ENCODE measurements at regions of chr10 and their contacts with region 1.

Region 1: DNA sequence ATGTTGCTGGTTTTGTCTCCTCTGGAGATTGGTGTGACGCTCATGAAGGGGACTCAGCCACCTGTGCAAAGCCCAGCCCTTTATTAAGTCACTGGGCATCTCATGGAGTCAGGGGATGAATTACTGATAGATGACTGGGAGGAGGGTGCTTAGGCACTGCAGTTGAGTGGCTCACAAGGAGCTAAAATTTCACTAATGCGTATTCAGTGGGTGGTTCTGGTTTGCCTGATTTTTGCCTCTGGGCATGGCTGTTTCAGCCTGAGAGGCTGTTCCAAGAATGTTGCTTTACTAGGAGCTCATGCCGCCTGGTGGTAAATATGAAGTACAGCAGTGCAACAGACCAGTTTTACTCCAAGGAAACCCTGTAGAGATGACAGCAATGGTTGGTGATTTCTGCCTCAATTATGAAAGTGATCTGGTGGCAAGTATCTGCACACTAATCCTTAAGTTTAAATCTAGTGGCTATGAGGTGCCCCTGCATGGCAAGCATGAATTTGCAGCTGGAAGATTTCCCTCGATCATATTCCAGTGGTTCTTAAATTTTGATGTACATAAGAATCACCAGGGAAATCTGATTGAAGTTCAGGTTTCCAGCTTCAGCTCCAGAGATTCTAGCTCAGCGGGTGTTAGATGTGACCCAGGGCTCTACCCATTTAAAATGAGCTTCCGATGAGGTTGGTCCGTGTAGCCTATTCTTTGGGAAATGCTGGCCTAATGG is 19.9 kb downstream of the ACTA2 start:
- DNase-seq: peak; percentile 59
- ATAC-seq: peak; percentile 84
- H3K4me3 Mint-ChIP-seq: no peak overlapping the region
- H3K27ac Mint-ChIP-seq: peak overlapping the region; percentile 20
- H3K4me1 Mint-ChIP-seq: peaks cover 18% of the 10 kb centered on the region
- H3K27me3 Mint-ChIP-seq: no peaks in the 10 kb centered on the region

Region 2: GRCh38 chr10:88442716-88443115 is 490.0 kb before region 1 on chr10:
- CTCF ChIA-PET with region 1: no interaction called
- POLR2A ChIA-PET with region 1: no interaction called
- intact Hi-C with region 1: no loop called
- DNase-seq: no peak
- ATAC-seq: no peak
- H3K4me3 Mint-ChIP-seq: no peak overlapping the region
- H3K27ac Mint-ChIP-seq: no peak overlapping the region
- H3K4me1 Mint-ChIP-seq: no peaks in the 10 kb centered on the region
- H3K27me3 Mint-ChIP-seq: no peaks in the 10 kb centered on the region

Region 3: DNA sequence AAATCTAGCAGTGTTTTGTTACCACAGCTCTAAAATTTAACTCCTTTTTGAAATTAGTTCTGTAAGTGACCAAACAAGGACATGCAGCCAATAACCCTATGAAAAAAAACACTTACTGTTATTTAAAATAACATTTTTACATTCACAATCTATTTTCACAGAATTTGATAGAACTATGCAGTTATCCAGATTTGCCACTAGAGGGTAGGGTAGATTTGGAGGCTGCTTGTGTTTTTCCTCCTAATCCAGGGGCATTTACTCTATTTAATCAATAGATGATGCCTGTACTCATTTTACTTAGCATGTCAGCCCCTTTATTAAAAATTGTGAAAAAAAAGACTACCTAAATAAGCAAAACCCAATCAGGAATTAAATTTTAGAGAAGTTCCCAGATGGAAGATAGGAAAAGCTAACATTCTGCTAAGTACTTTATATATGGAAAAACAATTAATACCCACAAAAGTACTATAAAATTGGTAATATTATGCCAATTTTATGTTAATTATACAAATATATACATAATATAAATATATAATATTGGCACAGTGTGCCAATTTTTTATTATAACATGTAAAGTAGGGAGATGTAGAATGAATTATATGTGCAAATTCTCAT is 244.7 kb before region 1 on chr10:
- CTCF ChIA-PET with region 1: interaction called, 7 read pairs
- POLR2A ChIA-PET with region 1: no interaction called
- intact Hi-C with region 1: loop called (anchors 1 to 5 kb)
- DNase-seq: no peak
- ATAC-seq: no peak
- H3K4me3 Mint-ChIP-seq: no peak overlapping the region
- H3K27ac Mint-ChIP-seq: no peak overlapping the region
- H3K4me1 Mint-ChIP-seq: no peaks in the 10 kb centered on the region
- H3K27me3 Mint-ChIP-seq: peaks cover 8% of the 10 kb centered on the region

Region 4: GRCh38 chr10:88835096-88835909 is 97.4 kb before region 1 on chr10:
- CTCF ChIA-PET with region 1: interaction called, 217 read pairs
- POLR2A ChIA-PET with region 1: interaction called, 5 read pairs
- intact Hi-C with region 1: loop called (anchors 1 kb)
- DNase-seq: peak; percentile 93
- ATAC-seq: peak; percentile 90
- H3K4me3 Mint-ChIP-seq: no peak overlapping the region
- H3K27ac Mint-ChIP-seq: no peak overlapping the region
- H3K4me1 Mint-ChIP-seq: peaks cover 28% of the 10 kb centered on the region
- H3K27me3 Mint-ChIP-seq: no peaks in the 10 kb centered on the region

Region 5: DNA sequence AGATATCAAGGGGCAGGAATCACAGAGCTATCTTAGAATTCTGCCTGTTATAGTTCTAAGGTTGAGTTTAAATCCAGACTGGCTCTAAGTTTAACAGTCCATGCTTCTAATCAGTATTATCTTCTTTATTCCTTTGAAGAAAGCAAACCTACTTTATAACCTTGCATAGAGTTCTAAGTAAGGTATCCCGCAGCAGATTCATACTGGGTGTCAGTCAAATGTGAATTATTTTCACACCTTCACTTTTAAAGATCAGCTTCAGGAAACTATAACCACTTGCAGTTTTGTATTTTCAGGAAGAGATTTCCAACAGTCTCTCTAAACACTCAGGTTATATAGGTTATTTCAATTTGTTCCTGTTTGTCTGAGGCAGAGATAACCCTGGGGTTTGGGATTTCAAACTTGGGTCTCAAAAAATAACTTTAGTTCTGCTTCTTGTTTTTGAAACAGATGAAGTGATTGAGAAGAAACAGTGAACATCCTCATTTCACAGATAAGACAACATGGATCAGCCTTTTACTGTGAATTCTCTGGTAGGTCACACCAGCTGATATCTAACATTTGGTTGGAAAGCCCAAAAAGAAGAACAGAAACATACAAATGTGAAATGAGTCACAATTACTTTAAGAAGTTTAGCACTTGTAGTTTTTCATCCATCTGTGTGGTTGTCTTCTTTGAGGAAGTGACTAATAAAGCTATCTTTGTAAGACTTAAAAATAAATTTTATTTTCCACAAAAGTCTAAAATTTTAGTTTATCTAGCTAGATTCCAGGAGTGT is 31.3 kb before region 1 on chr10:
- CTCF ChIA-PET with region 1: interaction called, 37 read pairs
- POLR2A ChIA-PET with region 1: no interaction called
- intact Hi-C with region 1: no loop called
- DNase-seq: no peak
- ATAC-seq: peak; percentile 75
- H3K4me3 Mint-ChIP-seq: peak overlapping the region; percentile 26
- H3K27ac Mint-ChIP-seq: peak overlapping the region; percentile 90
- H3K4me1 Mint-ChIP-seq: peaks cover 60% of the 10 kb centered on the region
- H3K27me3 Mint-ChIP-seq: no peaks in the 10 kb centered on the region

Region 6: DNA sequence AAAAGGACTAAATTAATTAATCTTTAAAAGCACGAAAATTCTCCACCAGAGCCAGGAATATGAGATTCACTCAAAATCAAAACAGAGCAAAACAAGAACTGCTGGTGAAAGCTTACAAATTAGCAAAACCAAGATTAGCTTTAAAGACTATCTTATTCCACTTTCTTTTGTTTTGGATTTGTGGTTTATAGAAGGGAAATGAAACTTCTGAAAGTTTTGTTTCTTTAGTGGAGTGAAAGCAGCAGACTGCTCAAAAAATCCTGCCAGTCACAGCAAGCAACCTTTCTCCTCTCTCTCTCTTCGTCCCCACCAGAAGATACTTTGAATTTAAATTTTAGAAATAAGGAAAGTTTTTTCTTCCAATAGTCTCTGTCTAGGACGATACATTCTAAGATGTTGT is 12.1 kb after region 1 on chr10:
- CTCF ChIA-PET with region 1: interaction called, 50 read pairs
- POLR2A ChIA-PET with region 1: no interaction called
- intact Hi-C with region 1: no loop called
- DNase-seq: no peak
- ATAC-seq: no peak
- H3K4me3 Mint-ChIP-seq: no peak overlapping the region
- H3K27ac Mint-ChIP-seq: no peak overlapping the region
- H3K4me1 Mint-ChIP-seq: peaks cover 13% of the 10 kb centered on the region
- H3K27me3 Mint-ChIP-seq: no peaks in the 10 kb centered on the region

Region 7: GRCh38 chr10:88996927-88997326 is 64.2 kb after region 1 on chr10:
- CTCF ChIA-PET with region 1: interaction called, 53 read pairs
- POLR2A ChIA-PET with region 1: no interaction called
- intact Hi-C with region 1: loop called in 1 of 2 experiments (anchors 2 kb)
- DNase-seq: no peak
- ATAC-seq: no peak
- H3K4me3 Mint-ChIP-seq: no peak overlapping the region
- H3K27ac Mint-ChIP-seq: no peak overlapping the region
- H3K4me1 Mint-ChIP-seq: peaks cover 67% of the 10 kb centered on the region
- H3K27me3 Mint-ChIP-seq: no peaks in the 10 kb centered on the region

Region 8: DNA sequence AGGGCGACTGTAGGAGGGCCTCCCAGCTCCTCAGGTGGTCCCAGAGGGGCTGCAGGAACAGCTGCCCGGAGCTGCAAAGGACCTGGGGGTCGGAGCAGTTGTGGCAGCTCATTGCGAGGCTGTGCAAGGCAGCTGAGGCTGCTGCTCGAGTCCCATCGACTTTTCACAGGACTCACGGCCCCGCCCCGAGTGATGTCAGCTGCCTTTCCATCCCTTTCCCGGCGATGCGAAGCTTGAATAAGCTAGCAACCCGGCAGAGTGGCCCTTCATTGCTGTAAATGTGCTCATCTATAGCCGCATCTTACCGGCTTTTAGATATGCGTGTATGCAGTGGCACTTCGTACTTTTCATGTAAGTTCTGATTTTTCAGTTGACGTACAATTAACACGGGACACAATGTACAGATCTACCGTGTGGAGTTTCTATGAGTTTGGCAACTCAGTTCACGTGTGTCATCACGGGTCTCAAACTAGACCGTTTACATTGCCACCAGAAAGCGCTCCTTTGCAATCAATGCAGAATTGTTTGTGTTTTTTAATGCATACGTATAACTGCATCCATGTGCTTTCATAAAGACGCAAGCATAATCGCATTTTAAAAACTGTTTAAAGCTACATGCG is 274.6 kb after region 1 on chr10 and contains the start of gene CH25H:
- CTCF ChIA-PET with region 1: interaction called, 36 read pairs
- POLR2A ChIA-PET with region 1: no interaction called
- intact Hi-C with region 1: no loop called
- DNase-seq: peak; percentile 76
- ATAC-seq: peak; percentile 76
- H3K4me3 Mint-ChIP-seq: peak within 1 kb of the TSS; percentile 69
- H3K27ac Mint-ChIP-seq: no peak within 1 kb of the TSS
- H3K4me1 Mint-ChIP-seq: peaks cover 10% of the 10 kb centered on the region
- H3K27me3 Mint-ChIP-seq: peaks cover 35% of the 10 kb centered on the region
- total RNA-seq, gene CH25H: not detected